ENCODE measurements at regions of chr3 and their contacts with region 1.

Region 1: GRCh38 chr3:4948395-4948794 is 30.8 kb upstream of the BHLHE40 start:
- DNase-seq: no peak
- ATAC-seq: peak in 3 of 4 donors; percentile 71 to 84 (median 76)
- H3K4me3 ChIP-seq: no peak overlapping the region
- H3K27ac ChIP-seq: no peak overlapping the region
- H3K4me1 ChIP-seq: peaks cover 0 to 19% (median 3%) of the 10 kb centered on the region in 12 donors
- H3K27me3 ChIP-seq: no peaks in the 10 kb centered on the region
- CTCF ChIP-seq: no peak
- POLR2A ChIP-seq: no peak

Region 2: DNA sequence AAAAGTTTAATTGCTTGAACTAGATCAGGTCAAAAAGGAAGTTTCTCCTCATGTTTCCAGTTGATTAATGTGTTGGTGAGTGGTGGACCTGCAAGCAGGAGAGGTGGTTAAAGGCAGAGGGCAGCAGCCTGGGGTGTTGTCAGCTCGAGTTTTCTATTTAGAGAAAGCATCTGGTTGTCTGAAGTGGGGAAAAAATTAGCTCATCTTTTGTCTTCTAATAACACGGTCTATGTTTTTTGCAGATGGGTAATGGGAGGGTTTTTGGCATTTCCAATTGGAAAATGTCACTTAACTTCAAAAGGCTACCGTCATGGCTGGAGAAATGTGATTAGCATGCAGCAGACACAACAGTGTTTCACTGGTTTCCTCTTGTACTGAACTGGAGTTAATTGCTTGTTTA is 332.6 kb before region 1 on chr3:
- intact Hi-C with region 1: no loop called
- DNase-seq: no peak
- ATAC-seq: peak; percentile 61 to 84 (median 74)
- H3K4me3 ChIP-seq: no peak overlapping the region
- H3K27ac ChIP-seq: peak overlapping the region in 4 of 12 donors; percentile 3 to 38 (median 12)
- H3K4me1 ChIP-seq: peaks cover 0 to 16% (median 1%) of the 10 kb centered on the region in 12 donors
- H3K27me3 ChIP-seq: no peaks in the 10 kb centered on the region
- CTCF ChIP-seq: peak in 1 of 12 donors; percentile 17
- POLR2A ChIP-seq: no peak

Region 3: DNA sequence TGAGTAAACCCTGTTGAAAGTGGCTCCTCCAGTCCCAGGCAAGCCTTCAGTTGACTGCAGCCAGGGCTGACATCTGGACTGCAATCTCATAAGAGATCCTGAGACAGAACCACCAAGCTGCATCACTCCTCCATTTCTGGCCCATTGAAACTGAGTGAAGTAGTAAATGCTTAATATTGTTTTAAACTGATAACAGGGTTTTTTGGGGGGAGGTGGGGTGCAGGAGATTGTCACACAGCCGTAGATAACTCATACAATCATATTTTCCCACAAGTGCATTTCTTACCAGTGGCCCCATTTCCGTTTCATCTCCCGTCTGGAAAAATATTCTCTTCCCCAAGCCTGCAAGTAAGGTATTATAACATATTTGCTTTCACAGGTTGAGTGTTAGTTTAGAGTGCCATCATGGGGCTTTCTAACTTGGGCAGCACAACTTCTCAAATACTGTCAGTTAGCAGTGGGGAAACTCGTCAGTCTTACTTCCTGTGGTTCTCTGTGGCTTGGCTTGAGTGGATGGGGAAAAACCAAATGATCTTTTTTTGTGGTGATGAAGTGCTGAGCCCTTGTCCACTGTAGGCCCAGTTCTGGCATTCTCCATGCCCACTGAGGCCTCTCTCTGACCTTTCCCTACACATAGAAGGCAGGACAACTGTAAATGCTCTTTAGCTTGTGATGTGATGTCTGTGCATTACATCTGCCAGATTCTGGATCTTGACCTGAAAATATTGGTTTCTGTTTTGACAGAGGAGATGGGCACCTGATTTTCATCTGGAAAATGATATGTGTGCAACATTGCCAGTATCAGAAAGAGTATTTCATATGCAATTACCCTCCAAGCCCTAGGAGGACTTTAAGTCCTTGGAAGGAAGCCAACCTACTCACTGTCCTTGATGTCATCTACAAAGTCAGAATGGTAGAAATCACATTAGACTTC is 59.2 kb before region 1 on chr3:
- intact Hi-C with region 1: loop called in 3 of 10 experiments (anchors 5 to 10 kb)
- DNase-seq: no peak
- ATAC-seq: peak in 2 of 4 donors; percentile 41 to 62
- H3K4me3 ChIP-seq: no peak overlapping the region
- H3K27ac ChIP-seq: peak overlapping the region in 1 of 12 donors; percentile 23
- H3K4me1 ChIP-seq: peaks cover 0 to 13% (median 0%) of the 10 kb centered on the region in 12 donors
- H3K27me3 ChIP-seq: no peaks in the 10 kb centered on the region
- CTCF ChIP-seq: no peak
- POLR2A ChIP-seq: no peak

Region 4: DNA sequence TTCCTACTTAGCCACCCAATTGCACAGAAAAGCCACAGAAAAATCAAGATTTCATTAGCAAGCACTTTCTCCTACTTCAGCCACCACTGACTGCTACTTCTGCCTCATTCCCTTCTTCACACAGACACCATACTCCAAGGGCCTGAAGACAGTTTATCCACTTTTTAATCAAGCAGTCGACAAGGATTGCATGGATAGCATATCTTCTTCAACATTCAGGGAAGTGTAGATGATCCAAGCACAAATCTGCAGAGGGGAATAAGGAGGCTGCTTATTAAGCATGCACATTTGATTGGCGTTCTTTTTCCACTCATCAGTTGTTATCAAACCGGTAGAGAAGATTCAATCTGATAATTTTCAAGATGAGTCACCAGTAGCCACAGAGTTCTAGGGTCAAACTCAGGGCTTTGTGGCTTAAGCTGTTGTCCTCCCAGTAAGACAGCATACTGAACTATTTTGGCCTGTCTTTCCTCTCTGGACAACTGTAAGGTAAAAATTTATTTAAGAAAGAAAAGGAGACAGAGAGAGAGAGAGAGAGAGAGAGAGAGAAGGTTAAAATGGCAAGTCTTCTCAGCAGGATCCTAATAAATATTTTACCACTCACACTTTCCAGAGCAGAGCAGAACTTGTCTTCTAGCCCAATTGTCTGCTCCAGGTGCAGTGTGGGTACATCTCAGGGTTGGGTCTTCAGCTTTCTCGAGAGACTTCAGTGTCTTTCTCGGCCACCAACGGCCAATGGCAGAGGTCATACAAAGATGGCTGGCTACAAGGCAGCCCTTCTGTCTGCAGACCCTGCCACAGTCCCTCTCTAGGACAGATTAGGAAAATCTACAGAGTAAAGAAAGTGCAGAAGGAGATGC is 49.7 kb before region 1 on chr3:
- intact Hi-C with region 1: loop called in 2 of 10 experiments (anchors 10 kb)
- DNase-seq: no peak
- ATAC-seq: no peak
- H3K4me3 ChIP-seq: no peak overlapping the region
- H3K27ac ChIP-seq: peak overlapping the region in 5 of 12 donors; percentile 35 to 60 (median 52)
- H3K4me1 ChIP-seq: peaks cover 0 to 18% (median 0%) of the 10 kb centered on the region in 12 donors
- H3K27me3 ChIP-seq: no peaks in the 10 kb centered on the region
- CTCF ChIP-seq: no peak
- POLR2A ChIP-seq: no peak

Region 5: DNA sequence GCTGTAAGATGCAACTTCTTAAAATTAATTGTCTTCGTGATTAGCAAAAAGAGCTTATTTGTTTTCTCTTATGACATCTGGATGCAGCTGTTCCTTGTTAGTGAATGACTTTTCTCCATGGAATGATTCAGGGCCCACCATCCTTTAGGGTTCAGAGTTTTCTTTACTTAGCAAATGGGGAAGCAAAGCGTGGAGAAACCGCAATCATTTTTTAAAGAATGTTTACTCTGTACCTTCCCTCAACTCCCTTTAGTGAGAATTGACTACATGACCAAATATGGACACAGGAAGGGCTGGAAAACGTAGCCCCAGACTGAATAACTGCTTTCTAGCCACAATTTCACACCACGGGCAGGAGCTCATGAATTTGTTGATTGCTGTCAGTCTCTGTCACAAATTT is 369.2 kb after region 1 on chr3:
- intact Hi-C with region 1: no loop called
- DNase-seq: no peak
- ATAC-seq: peak in 1 of 4 donors; percentile 22
- H3K4me3 ChIP-seq: no peak overlapping the region
- H3K27ac ChIP-seq: no peak overlapping the region
- H3K4me1 ChIP-seq: no peaks in the 10 kb centered on the region
- H3K27me3 ChIP-seq: peaks cover 0 to 2% (median 0%) of the 10 kb centered on the region in 9 donors
- CTCF ChIP-seq: no peak
- POLR2A ChIP-seq: no peak

Measured in heart left ventricle (tissue), 16 donors.